ENCODE measurements at regions of chr12 and their contacts with region 1.

Region 1: DNA sequence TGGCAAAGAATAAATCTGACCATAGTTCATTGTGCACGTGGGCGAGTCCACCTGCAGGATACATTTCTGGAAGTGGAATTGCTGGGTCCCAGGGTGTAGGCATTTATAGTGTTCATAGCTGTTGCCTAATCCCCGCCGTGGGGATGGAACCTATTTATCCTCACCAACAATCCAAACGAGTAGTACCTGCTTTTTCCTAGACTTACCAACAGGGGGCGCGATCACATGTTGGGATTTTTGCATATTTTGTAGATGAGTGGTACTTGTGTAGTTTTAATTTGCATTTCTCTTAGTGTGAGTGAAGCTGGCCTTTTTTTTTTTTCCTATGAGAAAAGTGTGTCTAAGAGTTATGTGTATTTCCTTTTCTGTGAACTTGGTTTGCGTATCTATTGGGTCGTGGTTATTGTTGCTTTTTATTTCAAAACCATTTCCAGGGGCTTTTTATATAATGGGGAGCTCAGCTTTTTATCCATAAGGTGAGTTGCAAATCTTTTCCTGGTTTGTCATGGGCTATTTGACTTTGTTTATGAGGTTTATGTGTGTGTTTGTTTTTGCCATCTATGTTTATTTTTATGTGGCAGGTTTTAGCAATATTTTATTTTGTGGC is 67.2 kb downstream of the CCDC92 start:
- DNase-seq: peak; percentile 77
- ATAC-seq: peak; percentile 62
- H3K4me3 ChIP-seq: no peak overlapping the region
- H3K4me3 Mint-ChIP-seq: no peak overlapping the region
- H3K27ac ChIP-seq: no peak overlapping the region
- H3K27ac Mint-ChIP-seq: no peak overlapping the region
- H3K4me1 ChIP-seq: no peaks in the 10 kb centered on the region
- H3K4me1 Mint-ChIP-seq: peaks cover 4% of the 10 kb centered on the region
- H3K27me3 ChIP-seq: peaks cover 0 to 6% (median 0%) of the 10 kb centered on the region in 4 experiments
- H3K27me3 Mint-ChIP-seq: peaks cover 16% of the 10 kb centered on the region
- CTCF ChIP-seq: peak; percentile 83

Region 2: GRCh38 chr12:123860377-123860776 is 45.0 kb before region 1 on chr12:
- CTCF ChIA-PET with region 1: no interaction called
- POLR2A ChIA-PET with region 1: no interaction called
- intact Hi-C with region 1: no loop called
- DNase-seq: no peak
- ATAC-seq: no peak
- H3K4me3 ChIP-seq: no peak overlapping the region
- H3K4me3 Mint-ChIP-seq: no peak overlapping the region
- H3K27ac ChIP-seq: no peak overlapping the region
- H3K27ac Mint-ChIP-seq: no peak overlapping the region
- H3K4me1 ChIP-seq: no peaks in the 10 kb centered on the region
- H3K4me1 Mint-ChIP-seq: no peaks in the 10 kb centered on the region
- H3K27me3 ChIP-seq: no peaks in the 10 kb centered on the region
- H3K27me3 Mint-ChIP-seq: peaks cover 16% of the 10 kb centered on the region
- CTCF ChIP-seq: no peak

Region 3: GRCh38 chr12:123877968-123878367 is 27.5 kb before region 1 on chr12:
- CTCF ChIA-PET with region 1: no interaction called
- POLR2A ChIA-PET with region 1: no interaction called
- intact Hi-C with region 1: no loop called
- DNase-seq: no peak
- ATAC-seq: no peak
- H3K4me3 ChIP-seq: no peak overlapping the region
- H3K4me3 Mint-ChIP-seq: no peak overlapping the region
- H3K27ac ChIP-seq: no peak overlapping the region
- H3K27ac Mint-ChIP-seq: no peak overlapping the region
- H3K4me1 ChIP-seq: no peaks in the 10 kb centered on the region
- H3K4me1 Mint-ChIP-seq: no peaks in the 10 kb centered on the region
- H3K27me3 ChIP-seq: no peaks in the 10 kb centered on the region
- H3K27me3 Mint-ChIP-seq: peaks cover 14% of the 10 kb centered on the region
- CTCF ChIP-seq: no peak

Region 4: GRCh38 chr12:123891516-123892179 is 13.8 kb before region 1 on chr12:
- CTCF ChIA-PET with region 1: no interaction called
- POLR2A ChIA-PET with region 1: no interaction called
- intact Hi-C with region 1: no loop called
- DNase-seq: no peak
- ATAC-seq: no peak
- H3K4me3 ChIP-seq: no peak overlapping the region
- H3K4me3 Mint-ChIP-seq: no peak overlapping the region
- H3K27ac ChIP-seq: no peak overlapping the region
- H3K27ac Mint-ChIP-seq: no peak overlapping the region
- H3K4me1 ChIP-seq: no peaks in the 10 kb centered on the region
- H3K4me1 Mint-ChIP-seq: no peaks in the 10 kb centered on the region
- H3K27me3 ChIP-seq: no peaks in the 10 kb centered on the region
- H3K27me3 Mint-ChIP-seq: peaks cover 4% of the 10 kb centered on the region
- CTCF ChIP-seq: no peak

Region 5: GRCh38 chr12:123952037-123952436 is 46.6 kb after region 1 on chr12:
- CTCF ChIA-PET with region 1: no interaction called
- POLR2A ChIA-PET with region 1: no interaction called
- intact Hi-C with region 1: no loop called
- DNase-seq: no peak
- ATAC-seq: no peak
- H3K4me3 ChIP-seq: no peak overlapping the region
- H3K4me3 Mint-ChIP-seq: no peak overlapping the region
- H3K27ac ChIP-seq: no peak overlapping the region
- H3K27ac Mint-ChIP-seq: no peak overlapping the region
- H3K4me1 ChIP-seq: no peaks in the 10 kb centered on the region
- H3K4me1 Mint-ChIP-seq: no peaks in the 10 kb centered on the region
- H3K27me3 ChIP-seq: no peaks in the 10 kb centered on the region
- H3K27me3 Mint-ChIP-seq: no peaks in the 10 kb centered on the region
- CTCF ChIP-seq: no peak

Region 6: GRCh38 chr12:123972457-123973401 is 67.3 kb after region 1 on chr12 and contains the starts of genes CCDC92 and ZNF664:
- CTCF ChIA-PET with region 1: no interaction called
- POLR2A ChIA-PET with region 1: no interaction called
- intact Hi-C with region 1: loop called (anchors 1 kb)
- DNase-seq: peak; percentile 97
- ATAC-seq: peak; percentile 82
- H3K4me3 ChIP-seq: peak within 1 kb of the TSS; percentile 15 to 72 (median 62)
- H3K4me3 Mint-ChIP-seq: peak within 1 kb of the TSS; percentile 90
- H3K27ac ChIP-seq: peak within 1 kb of the TSS; percentile 16 to 71
- H3K27ac Mint-ChIP-seq: peak within 1 kb of the TSS; percentile 88
- H3K4me1 ChIP-seq: peaks cover 13 to 16% of the 10 kb centered on the region in 2 donors
- H3K4me1 Mint-ChIP-seq: peaks cover 16% of the 10 kb centered on the region
- H3K27me3 ChIP-seq: no peaks in the 10 kb centered on the region
- H3K27me3 Mint-ChIP-seq: no peaks in the 10 kb centered on the region
- CTCF ChIP-seq: no peak
- total RNA-seq, gene CCDC92: 33.6 and 36.2 TPM in 2 replicates
- total RNA-seq, gene ZNF664: 47.1 and 52.2 TPM in 2 replicates

Region 7: GRCh38 chr12:124036674-124037109 is 131.3 kb after region 1 on chr12:
- CTCF ChIA-PET with region 1: interaction called, 11 read pairs
- POLR2A ChIA-PET with region 1: no interaction called
- intact Hi-C with region 1: no loop called
- DNase-seq: peak; percentile 68
- ATAC-seq: no peak
- H3K4me3 ChIP-seq: no peak overlapping the region
- H3K4me3 Mint-ChIP-seq: no peak overlapping the region
- H3K27ac ChIP-seq: no peak overlapping the region
- H3K27ac Mint-ChIP-seq: no peak overlapping the region
- H3K4me1 ChIP-seq: no peaks in the 10 kb centered on the region
- H3K4me1 Mint-ChIP-seq: no peaks in the 10 kb centered on the region
- H3K27me3 ChIP-seq: no peaks in the 10 kb centered on the region
- H3K27me3 Mint-ChIP-seq: peaks cover 16% of the 10 kb centered on the region
- CTCF ChIP-seq: peak; percentile 98

Measured in B cell (primary cell).